Activated T-helper 2 cell treated with anti-CD3 and anti-CD28 coated beads, Interferon-gamma antibody, Interleukin-2, Interleukin-4, amounts not matched to agents 10 μg/mL and 5 μg/mL and 100 μg/mL, durations not matched to agents 14 hours and 24 hours and 36 hours (primary cell): ENCODE measurements at regions of chr2 and their contacts with region 1.

Region 1: DNA sequence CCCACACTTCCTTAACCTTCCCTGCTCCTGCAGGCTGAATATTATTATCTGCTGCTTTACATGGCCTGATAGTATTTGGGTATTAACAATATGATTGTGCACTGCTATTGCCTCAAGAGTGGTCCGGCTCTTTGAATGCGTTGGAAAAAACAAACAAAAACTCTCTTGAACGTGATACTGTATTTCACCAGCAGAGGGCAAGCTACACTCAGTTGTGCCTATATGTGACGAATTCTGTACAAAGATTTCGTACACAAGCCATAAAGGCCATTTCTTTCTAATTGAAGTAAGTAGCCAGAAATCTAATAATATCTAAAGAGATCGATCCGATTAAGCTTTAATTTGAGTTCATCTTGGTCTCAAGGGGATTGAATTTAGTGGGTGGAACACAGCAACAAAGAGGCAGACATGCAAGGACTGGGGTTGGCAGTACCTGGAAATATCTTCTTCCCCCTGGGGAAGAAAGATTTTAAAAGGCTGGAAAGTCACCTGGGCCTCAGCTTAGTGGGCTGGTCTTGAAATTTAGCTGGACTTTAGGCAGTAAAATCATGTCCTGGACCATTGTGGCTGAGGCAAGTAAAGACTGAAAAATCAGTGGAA is 49.3 kb upstream of the RAB6D start:
- DNase-seq: no peak
- H3K4me3 Mint-ChIP-seq: no peak overlapping the region
- H3K27ac Mint-ChIP-seq: no peak overlapping the region
- H3K4me1 Mint-ChIP-seq: peaks cover 9% of the 10 kb centered on the region
- H3K27me3 Mint-ChIP-seq: peaks cover 42% of the 10 kb centered on the region

Region 2: DNA sequence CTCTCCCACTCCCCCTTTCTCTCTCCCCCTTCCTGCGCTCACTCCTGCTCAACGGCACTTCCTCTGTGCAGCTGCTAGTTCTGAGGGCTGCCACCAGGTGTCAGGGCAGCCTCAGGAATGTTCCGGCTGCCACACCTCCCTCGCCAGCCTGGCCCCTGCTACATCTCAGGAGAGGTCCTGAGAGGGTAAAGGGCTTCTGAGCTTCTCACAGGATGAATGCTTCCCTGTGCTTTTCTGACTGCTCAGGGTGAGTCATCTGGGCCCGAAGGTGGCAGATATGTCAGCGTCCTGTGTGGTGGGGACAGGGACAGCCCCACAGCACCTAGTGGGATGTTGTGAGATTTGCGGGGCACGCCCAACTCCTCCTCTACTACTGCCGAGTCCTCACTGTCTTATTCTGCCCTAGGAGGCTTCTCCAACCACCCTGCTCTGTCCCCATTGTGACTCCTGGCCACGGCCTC is 259.1 kb before region 1 on chr2:
- intact Hi-C with region 1: loop called (anchors 2 kb)
- DNase-seq: peak; percentile 50
- H3K4me3 Mint-ChIP-seq: no peak overlapping the region
- H3K27ac Mint-ChIP-seq: no peak overlapping the region
- H3K4me1 Mint-ChIP-seq: peaks cover 21% of the 10 kb centered on the region
- H3K27me3 Mint-ChIP-seq: peaks cover 5% of the 10 kb centered on the region

Region 3: GRCh38 chr2:131445896-131446295 is 32.6 kb after region 1 on chr2:
- intact Hi-C with region 1: no loop called
- DNase-seq: no peak
- H3K4me3 Mint-ChIP-seq: no peak overlapping the region
- H3K27ac Mint-ChIP-seq: no peak overlapping the region
- H3K4me1 Mint-ChIP-seq: peaks cover 4% of the 10 kb centered on the region
- H3K27me3 Mint-ChIP-seq: peaks cover 15% of the 10 kb centered on the region

Region 4: GRCh38 chr2:131492418-131493198 is 79.4 kb after region 1 on chr2:
- intact Hi-C with region 1: loop called (anchors 2 kb)
- DNase-seq: peak; percentile 90
- H3K4me3 Mint-ChIP-seq: peak overlapping the region; percentile 99
- H3K27ac Mint-ChIP-seq: peak overlapping the region; percentile 98
- H3K4me1 Mint-ChIP-seq: peaks cover 21% of the 10 kb centered on the region
- H3K27me3 Mint-ChIP-seq: no peaks in the 10 kb centered on the region

Region 5: DNA sequence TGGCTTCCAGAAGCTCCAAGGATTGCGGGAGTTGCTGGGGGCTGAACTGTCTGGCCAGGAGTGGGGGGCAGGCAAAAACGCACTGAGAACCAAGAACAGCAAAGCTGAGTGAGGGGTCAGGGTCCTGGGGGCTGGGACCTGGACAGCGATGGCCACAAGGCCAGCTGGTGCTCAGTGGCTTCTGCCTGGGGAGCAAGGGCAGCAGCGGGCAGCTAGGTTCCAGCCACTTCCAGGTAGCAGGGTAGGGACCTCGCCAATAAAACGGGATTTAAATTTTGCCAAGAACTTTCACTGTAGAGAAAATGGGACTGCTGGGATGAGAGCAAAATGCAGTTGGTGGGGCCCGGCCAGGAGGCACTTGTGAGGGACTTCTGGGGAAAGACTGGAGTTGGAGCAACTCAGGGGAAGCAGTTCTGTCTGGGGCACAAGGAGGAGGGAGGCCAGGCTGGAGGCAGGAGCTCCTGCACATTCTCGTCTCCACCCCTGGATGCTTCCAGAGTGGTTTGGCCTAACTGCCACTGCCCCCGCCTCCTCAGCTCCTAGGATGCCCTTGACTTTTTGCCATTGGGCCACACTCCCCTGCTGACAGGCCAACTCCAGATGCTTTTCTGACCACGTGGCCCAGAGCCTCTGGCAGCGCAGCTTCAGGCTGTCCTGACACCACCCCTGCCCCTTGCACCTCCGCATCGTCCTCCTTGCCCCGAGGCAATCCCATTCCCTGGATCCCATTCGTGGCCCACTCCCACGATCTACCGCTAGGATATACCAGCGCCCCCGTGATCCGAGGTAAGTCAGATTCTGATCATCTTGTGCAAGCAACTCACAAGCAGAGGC is 108.9 kb after region 1 on chr2:
- intact Hi-C with region 1: loop called (anchors 5 kb)
- DNase-seq: no peak
- H3K4me3 Mint-ChIP-seq: no peak overlapping the region
- H3K27ac Mint-ChIP-seq: no peak overlapping the region
- H3K4me1 Mint-ChIP-seq: peaks cover 4% of the 10 kb centered on the region
- H3K27me3 Mint-ChIP-seq: no peaks in the 10 kb centered on the region

Region 6: DNA sequence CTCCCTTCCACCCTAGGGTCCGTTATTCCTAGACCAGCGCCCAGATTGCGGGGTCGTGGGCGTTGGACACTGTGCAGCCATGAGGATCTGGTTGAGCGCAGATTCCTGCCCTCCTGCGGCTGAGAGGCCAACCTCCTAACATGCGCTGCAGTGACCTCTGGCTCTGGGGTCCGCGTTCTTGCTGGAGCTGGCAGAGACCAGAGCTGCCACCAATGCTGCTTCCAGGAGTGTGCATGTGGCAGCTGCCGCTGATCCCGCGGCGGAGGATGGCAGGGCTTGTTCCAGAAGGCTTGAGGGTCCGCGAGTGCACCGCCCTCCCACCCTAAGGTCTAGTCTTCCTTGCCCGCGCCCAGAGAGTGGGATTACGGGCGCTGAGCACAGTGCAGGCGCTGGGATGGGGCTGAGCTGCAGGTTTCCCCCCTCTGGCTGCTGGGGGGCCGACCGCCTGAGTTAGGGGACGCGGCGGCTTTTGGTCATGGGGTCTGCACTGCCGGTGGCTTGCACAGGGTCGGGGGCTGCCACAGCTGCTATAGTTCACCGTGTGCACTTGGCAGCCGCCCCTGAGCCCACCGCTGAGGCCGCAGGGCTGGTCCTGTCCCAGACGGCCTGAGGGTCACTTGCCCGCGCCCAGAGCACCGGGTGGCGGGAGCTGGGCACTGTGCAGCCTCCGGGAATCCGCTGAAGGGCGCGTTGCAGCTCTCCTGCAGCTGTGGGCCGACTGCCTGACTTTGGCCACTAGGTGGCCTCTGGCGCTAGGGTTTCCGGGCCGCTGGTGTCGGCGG is 260.3 kb after region 1 on chr2:
- intact Hi-C with region 1: loop called (anchors 2 kb)
- DNase-seq: peak; percentile 56
- H3K4me3 Mint-ChIP-seq: no peak overlapping the region
- H3K27ac Mint-ChIP-seq: no peak overlapping the region
- H3K4me1 Mint-ChIP-seq: peaks cover 4% of the 10 kb centered on the region
- H3K27me3 Mint-ChIP-seq: peaks cover 34% of the 10 kb centered on the region